ENCODE measurements at regions of chr7 and their contacts with region 1.

Region 1: DNA sequence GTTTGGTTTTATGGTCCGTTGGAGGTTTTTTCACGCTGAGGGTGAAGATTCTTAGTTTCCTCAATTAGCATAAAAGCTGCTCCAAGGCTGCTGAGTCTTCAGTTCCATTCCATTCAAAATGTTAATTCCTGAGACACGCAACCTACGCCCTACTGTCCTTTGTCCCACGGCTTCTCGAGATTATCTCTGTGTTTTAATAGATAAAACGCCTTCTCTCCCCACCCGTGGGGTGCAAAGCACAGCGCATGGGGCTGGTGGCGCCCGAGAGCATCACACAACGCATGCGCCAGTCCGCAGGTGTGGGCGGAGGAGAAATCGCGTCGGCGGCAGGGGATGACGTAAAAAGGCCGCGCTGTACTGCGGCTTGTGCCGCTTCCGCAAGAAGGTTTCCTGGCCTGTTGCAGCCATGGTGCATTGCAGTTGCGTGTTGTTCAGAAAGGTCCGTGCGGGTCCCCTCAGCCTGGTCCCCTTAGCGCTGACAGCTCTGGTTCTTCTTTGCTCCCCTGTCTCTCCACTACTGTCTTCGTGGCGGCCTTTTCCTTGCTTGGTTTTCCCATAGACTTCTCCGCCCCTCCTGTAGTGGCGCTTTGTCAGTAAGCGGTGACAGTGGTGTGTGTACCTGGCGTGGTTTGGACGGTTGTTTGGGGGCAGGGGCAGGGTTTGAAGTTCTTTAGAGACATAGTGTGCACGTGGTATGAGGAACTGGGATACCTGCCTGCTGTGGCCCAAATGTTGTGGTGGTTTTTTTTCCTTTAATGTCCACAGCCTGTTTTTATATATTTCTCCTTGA is at the start of gene GTPBP10:
- DNase-seq: peak; percentile 94
- H3K4me3 Mint-ChIP-seq: peak within 1 kb of the TSS; percentile 91
- H3K27ac Mint-ChIP-seq: peak within 1 kb of the TSS; percentile 93
- H3K4me1 Mint-ChIP-seq: peaks cover 31% of the 10 kb centered on the region
- H3K27me3 Mint-ChIP-seq: no peaks in the 10 kb centered on the region
- total RNA-seq, gene GTPBP10: 26.6 to 28.3 TPM

Region 2: DNA sequence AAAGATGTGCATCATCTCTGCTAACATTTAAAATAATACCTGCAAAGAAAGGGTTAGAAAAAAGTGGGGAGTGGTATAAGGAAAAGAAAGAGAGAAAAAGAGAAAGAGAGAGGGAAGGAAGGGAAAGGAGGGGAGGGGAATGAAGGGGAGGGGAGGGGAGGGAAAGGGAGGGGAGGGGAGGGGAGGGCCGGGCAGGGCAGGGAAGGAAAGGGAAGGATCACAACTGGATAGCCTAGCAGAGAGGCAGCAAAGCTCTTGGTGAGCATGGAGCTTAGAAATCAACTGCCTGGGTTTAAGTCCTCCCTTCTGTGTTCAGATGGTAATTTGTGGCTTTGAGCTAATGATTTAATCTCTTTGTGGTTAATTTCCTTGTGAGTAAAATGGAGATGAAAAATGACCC is 20.0 kb before region 1 on chr7:
- CTCF ChIA-PET with region 1: no interaction called
- POLR2A ChIA-PET with region 1: no interaction called
- DNase-seq: no peak
- H3K4me3 Mint-ChIP-seq: no peak overlapping the region
- H3K27ac Mint-ChIP-seq: no peak overlapping the region
- H3K4me1 Mint-ChIP-seq: peaks cover 2% of the 10 kb centered on the region
- H3K27me3 Mint-ChIP-seq: peaks cover 20% of the 10 kb centered on the region

Region 3: DNA sequence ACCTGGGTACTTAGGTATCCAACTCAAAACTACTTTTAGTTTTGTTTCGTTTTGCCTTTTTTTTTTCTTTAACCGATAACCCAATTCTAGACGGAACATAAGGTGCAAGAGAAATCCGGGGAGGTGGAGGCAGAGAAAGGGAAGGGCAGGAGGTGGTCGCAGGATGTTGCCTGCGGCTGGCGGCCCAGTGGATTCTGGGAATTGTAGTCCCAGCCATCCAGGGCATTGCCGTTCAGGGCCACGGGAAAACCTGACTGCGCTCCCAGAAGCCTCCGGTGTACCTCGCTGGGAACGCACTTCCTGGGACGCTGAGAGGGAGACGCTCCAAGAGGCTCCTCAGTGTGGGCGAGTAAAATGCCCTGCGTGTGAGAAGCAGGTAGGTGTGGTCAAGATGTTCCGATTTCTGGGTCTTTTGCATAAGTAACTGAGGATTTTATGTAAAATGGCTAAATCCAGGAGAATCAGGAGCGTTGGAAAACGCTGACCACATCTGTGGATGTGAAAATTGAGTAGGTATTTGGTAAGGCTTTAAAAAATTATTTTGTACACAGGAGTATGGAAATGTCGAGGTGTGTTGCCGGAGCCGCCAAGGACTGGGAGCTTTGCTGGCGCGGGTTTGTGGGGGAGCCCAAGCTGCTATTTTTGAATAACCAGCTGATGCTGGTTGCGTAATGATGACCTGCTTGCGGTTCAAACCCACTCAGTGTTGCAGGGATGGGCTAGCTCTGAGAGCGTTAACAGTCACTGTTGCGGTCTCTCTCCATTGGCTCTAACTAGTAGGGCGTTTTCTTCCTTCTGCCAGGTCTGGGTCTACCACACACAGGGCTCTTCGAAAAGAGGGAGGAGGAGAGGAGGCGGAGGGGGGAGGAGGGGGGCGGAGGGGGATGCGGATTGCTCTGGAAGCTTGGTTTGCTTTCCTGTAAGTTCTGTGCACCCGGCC is 56.9 kb after region 1 on chr7 and contains the start of gene CLDN12:
- CTCF ChIA-PET with region 1: interaction called, 12 read pairs
- POLR2A ChIA-PET with region 1: interaction called, 17 read pairs
- DNase-seq: peak; percentile 85
- H3K4me3 Mint-ChIP-seq: peak within 1 kb of the TSS; percentile 90
- H3K27ac Mint-ChIP-seq: peak within 1 kb of the TSS; percentile 79
- H3K4me1 Mint-ChIP-seq: peaks cover 11% of the 10 kb centered on the region
- H3K27me3 Mint-ChIP-seq: peaks cover 25% of the 10 kb centered on the region
- total RNA-seq, gene CLDN12: 6.0 to 6.7 TPM

Region 4: GRCh38 chr7:90645784-90646183 is 299.3 kb after region 1 on chr7:
- CTCF ChIA-PET with region 1: no interaction called
- POLR2A ChIA-PET with region 1: no interaction called
- DNase-seq: no peak
- H3K4me3 Mint-ChIP-seq: no peak overlapping the region
- H3K27ac Mint-ChIP-seq: no peak overlapping the region
- H3K4me1 Mint-ChIP-seq: no peaks in the 10 kb centered on the region
- H3K27me3 Mint-ChIP-seq: no peaks in the 10 kb centered on the region